ENCODE measurements at regions of chr22 and their contacts with region 1.

Region 1: DNA sequence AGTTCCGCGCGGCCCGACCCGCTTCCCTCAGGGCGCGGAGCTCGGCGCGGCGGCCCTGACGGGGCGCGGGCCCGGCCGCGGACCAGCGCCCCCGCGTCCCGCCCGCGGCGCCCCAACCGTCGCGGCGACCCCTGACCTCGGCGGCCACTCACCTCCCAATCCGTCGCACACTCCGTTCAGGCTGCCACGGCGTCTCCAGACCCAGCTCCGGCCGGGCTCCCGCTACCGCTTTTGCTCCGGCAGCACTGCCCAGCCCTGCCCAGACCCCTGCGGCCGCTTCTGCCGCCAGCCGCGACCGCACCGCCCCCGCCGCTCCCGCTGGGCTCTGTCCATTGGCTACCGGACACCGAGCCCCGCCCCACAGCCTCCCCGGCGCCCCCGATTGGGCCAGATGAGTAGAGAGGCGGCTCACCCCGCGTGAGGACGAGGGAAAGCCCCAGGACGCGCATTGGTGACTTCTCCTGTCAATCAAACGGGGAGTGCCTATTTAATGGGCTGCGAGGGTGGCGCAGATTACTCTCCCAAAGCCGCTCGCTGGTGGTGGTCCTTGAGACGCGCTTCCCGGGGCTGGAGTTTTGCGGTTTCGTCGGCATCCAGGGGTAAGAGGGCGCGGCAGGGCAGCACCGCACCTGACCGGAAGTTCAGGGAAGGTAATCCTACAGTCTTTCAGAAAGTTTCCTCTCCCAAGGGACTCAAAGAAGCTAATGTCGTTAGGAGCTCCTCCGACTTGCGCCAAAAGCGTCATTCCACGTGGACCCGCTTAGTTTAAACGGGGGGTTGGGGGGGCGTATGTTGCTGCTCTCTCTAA is at the start of gene PACSIN2:
- DNase-seq: peak; percentile 100
- total RNA-seq, gene PACSIN2: 41.5 TPM

Region 2: GRCh38 chr22:42844756-42845155 is 170.3 kb before region 1 on chr22:
- intact Hi-C with region 1: no loop called
- DNase-seq: no peak

Region 3: GRCh38 chr22:42856865-42857704 is 158.0 kb before region 1 on chr22 and contains the start of gene ARFGAP3:
- intact Hi-C with region 1: loop called (anchors 5 kb)
- DNase-seq: peak; percentile 97
- total RNA-seq, gene ARFGAP3: 32.5 TPM

Region 4: GRCh38 chr22:42901790-42902508 is 113.1 kb before region 1 on chr22:
- intact Hi-C with region 1: loop called (anchors 10 kb)
- DNase-seq: no peak

Region 5: DNA sequence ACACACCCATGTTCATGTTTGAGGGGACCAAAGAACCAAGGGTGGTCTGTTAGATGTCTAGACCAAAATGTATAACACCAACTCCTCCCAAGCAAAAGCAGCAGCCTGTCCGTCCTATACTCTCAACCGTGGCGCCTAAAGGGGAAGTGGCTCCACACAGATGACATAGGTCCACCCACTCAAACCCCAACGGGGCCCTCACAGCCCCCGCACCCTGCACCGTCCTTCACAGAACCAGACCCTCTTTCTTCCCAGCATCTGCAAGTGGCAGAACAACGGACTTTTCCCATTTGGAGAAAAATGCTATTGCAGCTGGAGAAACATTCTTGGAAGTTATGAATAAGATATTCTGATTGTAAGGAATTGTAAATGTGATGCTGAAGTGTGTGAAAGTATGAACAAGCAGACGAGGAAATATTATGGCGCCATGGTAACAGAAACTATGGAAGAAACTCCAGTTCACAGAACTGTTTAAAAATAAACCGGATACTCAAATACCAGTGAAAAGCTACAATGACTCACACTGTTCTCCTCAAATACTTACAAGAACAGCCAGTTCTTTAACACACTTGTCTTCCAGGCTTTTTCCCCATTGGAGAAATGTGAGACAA is 81.5 kb before region 1 on chr22:
- intact Hi-C with region 1: loop called (anchors 5 kb)
- DNase-seq: peak; percentile 78

Region 6: DNA sequence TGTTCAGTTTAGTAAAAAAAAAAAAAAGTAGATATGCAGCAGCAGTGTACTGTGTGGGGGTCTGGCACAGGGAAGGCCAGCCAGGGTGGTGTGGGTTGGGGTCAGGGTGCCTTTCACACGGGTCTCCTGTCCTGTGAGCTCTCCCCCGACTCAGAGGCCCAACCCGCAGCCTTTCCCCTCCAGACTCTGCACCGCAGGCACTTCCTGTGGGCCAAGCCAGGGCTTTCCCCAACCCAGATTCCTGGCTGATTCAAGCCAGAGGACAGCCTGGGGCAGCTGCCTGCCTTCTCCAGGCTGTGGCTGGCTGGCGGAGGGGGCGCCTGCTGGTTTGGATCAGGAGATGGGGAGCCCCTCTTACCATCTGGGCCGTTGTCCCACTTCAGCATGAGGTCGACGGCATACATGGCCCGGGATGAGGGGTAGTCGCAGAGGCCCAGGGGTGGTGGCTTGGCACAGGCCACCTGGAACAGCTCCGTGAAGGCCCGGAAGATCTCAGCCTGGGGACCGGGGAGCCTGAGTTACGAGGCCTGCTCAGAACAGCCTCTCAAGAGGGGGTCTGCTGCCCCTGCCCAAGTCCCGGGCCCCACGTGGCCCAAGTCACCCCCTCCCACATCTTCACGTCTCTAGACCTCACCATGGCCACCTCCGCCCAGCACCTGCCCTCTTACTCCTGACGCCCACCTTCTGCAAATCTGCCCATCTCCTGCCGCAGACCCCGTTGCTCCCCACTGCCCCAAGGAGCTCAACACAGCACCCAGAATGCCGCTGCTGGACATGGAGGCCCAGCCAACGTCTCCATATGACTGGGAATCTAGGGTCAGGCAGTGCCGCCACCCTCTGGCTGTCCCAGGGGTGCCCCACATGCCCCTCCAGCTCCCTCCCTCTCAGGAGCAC is 153.6 kb after region 1 on chr22:
- intact Hi-C with region 1: no loop called
- DNase-seq: no peak